GM12878 (cell line): ENCODE measurements at regions of chr14 and their contacts with region 1.

Region 1: DNA sequence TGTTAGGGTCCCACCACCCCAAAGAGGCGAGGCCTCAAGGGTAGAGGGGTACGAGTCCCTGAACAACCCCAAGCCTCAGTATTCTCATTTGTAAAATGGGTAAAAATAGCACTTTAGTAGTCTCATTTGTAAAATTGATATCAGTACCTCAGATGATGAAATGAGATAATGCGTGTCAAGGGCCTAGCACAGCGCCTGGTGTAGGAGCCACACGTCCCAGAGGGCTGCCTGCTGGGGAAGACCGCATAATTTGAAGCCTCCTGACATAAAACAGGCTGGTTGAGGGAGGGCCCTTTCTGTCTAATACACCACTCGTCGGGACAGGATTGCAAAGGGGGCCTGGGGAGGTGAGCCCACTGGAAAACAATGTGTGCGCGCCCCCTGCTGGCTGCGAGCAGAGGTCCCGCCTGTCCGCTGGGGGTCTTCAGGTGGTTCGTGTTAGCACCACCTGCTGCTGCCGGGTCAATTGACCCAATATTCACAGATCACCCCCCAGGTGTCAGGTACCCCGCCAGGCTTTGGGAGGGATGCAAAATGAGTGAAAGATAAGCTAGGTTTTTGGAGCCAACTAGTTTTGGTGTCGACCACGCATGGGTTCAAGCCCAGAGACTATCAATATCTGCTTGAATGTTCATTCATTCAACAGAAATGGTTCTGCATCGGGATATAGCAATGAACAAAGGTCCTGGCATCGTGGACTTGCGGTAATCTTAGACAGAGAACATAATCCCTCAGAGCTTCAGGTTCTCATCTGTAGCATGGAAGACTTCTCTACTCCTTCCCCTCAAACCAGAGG is 24.7 kb upstream of the IRF2BPL start:
- DNase-seq: no peak
- ATAC-seq: peak; percentile 98
- H3K4me3 ChIP-seq: no peak overlapping the region
- H3K27ac ChIP-seq: no peak overlapping the region
- H3K4me1 ChIP-seq: peaks cover 12% of the 10 kb centered on the region
- H3K27me3 ChIP-seq: no peaks in the 10 kb centered on the region
- CTCF ChIP-seq: peak; percentile 77 to 90 (median 85)
- EP300 ChIP-seq: no peak
- POLR2A ChIP-seq: no peak
- RAD21 ChIP-seq: peak; percentile 91

Region 2: DNA sequence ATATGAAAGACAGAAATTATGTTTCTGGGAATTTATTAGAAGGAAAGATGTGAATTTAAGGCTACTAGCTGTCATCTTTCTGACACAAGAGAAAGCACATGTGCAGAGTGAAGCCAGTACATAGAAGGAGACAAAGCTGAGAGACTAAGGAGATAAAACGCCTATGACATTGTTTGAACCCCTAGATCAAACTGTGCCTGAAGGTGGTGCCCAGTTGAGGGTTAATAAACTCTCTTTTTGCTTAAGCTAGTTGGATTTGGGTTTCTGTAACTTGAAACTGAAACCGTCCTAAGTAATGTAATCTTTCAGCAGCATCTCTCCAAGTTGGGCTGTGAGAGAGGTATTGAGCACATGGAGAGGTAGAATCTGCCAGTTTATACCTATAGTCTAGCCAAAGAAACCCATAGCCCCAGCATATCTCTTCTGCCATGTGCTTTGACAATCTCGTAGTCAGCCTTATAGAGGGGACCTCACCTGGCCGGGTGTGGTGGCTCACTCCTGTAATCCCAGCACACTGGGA is 142.8 kb before region 1 on chr14:
- CTCF ChIA-PET with region 1: interaction called, 170 read pairs
- POLR2A ChIA-PET with region 1: interaction called, 11 read pairs
- RAD21 ChIA-PET with region 1: interaction called, 119 read pairs
- SMC1A ChIA-PET with region 1: interaction called, 174 read pairs
- in situ Hi-C with region 1: no loop called
- intact Hi-C with region 1: loop called (anchors 1 kb)
- DNase-seq: no peak
- ATAC-seq: no peak
- H3K4me3 ChIP-seq: no peak overlapping the region
- H3K27ac ChIP-seq: no peak overlapping the region
- H3K4me1 ChIP-seq: peaks cover 9% of the 10 kb centered on the region
- H3K27me3 ChIP-seq: no peaks in the 10 kb centered on the region
- CTCF ChIP-seq: no peak
- EP300 ChIP-seq: no peak
- POLR2A ChIP-seq: no peak
- RAD21 ChIP-seq: no peak

Region 3: DNA sequence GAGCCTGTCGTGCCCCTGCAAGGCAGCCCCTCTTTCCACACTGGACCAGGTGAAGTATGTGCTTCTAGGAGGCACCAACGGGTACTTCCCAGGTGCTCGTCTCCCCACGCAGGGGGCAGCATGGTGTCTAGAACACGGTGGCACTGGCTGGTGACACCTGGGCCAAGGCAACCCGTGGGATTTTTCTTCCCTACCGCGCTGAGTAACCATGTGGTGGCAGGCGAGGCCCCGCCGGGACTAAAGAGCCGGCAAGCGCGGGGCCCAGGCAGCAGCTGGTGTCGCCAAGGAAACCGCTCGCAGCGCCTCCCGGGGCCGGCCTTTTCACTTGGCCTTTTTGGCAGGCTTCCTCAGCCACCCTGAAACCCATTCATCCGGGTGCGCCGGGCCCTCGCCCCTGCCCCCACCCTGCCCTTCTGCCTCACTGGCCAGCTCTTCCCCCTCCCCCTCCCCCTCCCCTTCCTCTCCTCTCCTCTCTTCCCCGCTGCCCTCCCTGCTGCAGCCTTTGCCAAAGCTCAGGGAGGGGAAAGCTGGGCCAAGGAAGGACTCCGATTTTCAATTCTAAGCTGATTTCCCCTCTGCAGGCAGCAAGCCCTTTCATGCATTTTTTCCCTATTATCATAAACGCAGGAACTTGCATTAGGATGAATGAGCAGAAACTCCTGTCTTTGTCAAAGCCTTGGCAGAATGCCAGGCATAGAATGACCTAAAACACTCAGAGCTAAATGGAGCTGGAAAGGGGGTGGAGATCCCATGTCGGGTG is 106.0 kb before region 1 on chr14:
- CTCF ChIA-PET with region 1: interaction called, 26 read pairs
- POLR2A ChIA-PET with region 1: interaction called, 4 read pairs
- RAD21 ChIA-PET with region 1: interaction called, 24 read pairs
- SMC1A ChIA-PET with region 1: interaction called, 18 read pairs
- in situ Hi-C with region 1: no loop called
- intact Hi-C with region 1: no loop called
- DNase-seq: peak; percentile 67
- ATAC-seq: peak; percentile 87
- H3K4me3 ChIP-seq: no peak overlapping the region
- H3K27ac ChIP-seq: peak overlapping the region; percentile 64
- H3K4me1 ChIP-seq: peaks cover 29% of the 10 kb centered on the region
- H3K27me3 ChIP-seq: no peaks in the 10 kb centered on the region
- CTCF ChIP-seq: peak; percentile 45 to 72 (median 58)
- EP300 ChIP-seq: peak in 1 of 2 experiments; percentile 65; a peak in 2 of 4 replicates
- POLR2A ChIP-seq: no peak
- RAD21 ChIP-seq: peak; percentile 72

Region 4: DNA sequence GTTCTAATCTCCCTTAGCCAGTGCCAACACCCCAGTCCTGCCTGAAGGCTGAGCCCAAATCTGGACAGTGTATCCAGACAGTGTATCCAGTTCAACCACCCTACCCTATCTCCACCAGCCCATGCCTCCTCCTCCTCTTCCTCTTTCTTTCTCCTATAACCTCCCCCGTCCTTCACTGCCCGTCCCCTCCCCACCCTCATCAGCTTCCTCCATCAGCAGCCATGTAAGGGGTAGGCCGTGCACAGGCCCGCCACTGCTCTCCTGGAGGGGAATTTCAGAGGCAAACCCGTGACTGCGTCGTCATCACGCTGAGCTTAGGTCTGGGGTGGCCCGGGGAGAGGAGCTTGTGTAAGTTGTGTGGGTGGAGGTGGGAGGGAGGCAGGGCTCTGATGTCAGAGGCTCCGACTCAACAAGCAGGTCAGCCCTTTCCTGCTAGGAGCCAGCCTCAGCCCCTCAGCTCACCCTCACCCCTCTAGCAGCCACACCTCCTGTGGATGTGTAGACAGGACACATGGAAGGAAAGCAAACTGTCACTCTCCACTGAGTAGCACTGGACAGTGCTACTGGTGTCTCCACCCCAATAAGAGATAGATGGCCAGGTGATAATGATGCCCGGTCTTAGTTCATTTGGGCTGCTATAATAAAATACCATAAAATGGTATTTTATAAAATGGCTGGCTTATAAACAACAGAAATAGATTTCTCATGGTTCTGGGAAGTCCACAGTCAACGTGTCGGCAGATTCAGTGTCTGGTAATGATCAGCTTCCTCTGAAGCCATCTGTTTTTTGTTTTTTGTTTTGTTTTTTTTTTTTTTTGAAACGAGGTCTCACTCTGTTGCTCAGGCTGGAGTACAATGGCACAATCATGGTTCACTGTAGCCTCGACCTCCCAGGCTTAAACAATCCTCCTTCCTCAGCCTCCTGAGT is 75.2 kb before region 1 on chr14:
- CTCF ChIA-PET with region 1: interaction called, 18 read pairs
- POLR2A ChIA-PET with region 1: interaction called, 8 read pairs
- RAD21 ChIA-PET with region 1: interaction called, 3 read pairs
- SMC1A ChIA-PET with region 1: interaction called, 3 read pairs
- in situ Hi-C with region 1: no loop called
- intact Hi-C with region 1: no loop called
- DNase-seq: peak; percentile 81
- ATAC-seq: peak; percentile 98
- H3K4me3 ChIP-seq: no peak overlapping the region
- H3K27ac ChIP-seq: peak overlapping the region; percentile 65
- H3K4me1 ChIP-seq: peaks cover 20% of the 10 kb centered on the region
- H3K27me3 ChIP-seq: no peaks in the 10 kb centered on the region
- CTCF ChIP-seq: no peak
- EP300 ChIP-seq: peak; percentile 64 to 75; a peak in 2 of 4 replicates
- POLR2A ChIP-seq: peak; percentile 72
- RAD21 ChIP-seq: 0 out of 2 replicates have a peak, but pooled peaks have one; percentile 20

Region 5: DNA sequence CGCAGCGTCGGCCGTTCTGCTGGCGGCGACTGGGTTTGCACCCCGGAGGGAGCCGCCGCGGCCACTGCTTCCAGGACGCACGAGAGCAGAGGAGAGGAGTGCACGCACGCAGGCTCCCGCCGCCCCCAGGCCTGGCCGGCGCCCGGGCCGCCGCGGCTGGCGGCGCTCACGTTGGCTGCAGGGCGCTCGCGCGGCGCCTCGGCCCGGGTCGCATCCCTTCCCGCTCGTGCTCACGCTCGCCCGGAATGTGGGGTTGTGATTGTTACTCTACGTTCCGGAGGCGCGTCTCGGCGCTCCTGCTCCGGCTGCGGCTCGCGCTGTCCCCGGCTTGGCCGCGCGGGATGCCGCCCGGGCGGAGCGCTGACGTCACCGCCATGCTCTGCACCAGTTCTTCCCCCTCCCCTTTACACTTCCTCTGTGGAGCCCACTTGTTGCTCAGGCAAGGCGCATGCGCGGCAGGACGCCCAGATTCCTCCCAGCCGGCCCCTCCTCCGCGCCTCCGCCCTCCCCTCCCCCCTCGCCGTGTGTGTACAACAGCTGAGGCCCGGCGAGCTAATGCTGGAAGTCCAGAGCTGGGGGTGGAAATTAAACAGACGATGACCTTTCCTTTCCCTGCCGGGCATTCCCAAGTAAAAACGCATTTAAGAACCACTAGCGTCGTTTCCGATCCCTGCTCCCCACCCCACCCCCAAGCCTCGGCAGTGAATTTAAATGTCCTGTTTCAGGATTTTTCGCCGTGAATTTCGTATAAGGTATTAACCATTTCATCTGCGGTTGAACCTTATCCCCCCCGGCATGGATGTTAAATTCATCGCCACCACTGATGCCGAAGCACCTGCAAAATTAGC is 24.6 kb before region 1 on chr14 and contains the start of gene IRF2BPL:
- CTCF ChIA-PET with region 1: interaction called, 16 read pairs
- POLR2A ChIA-PET with region 1: interaction called, 151 read pairs
- RAD21 ChIA-PET with region 1: interaction called, 11 read pairs
- SMC1A ChIA-PET with region 1: interaction called, 23 read pairs
- in situ Hi-C with region 1: no loop called
- intact Hi-C with region 1: loop called (anchors 2 kb)
- DNase-seq: peak; percentile 87
- ATAC-seq: peak; percentile 61
- H3K4me3 ChIP-seq: peak within 1 kb of the TSS; percentile 81
- H3K27ac ChIP-seq: peak within 1 kb of the TSS; percentile 98
- H3K4me1 ChIP-seq: peaks cover 38% of the 10 kb centered on the region
- H3K27me3 ChIP-seq: no peaks in the 10 kb centered on the region
- CTCF ChIP-seq: no peak
- EP300 ChIP-seq: peak in 1 of 2 experiments; percentile 29; a peak in 2 of 4 replicates
- POLR2A ChIP-seq: peak; percentile 83
- RAD21 ChIP-seq: no peak
- polyA plus RNA-seq, gene IRF2BPL: 1.2 to 1.9 TPM

Region 6: DNA sequence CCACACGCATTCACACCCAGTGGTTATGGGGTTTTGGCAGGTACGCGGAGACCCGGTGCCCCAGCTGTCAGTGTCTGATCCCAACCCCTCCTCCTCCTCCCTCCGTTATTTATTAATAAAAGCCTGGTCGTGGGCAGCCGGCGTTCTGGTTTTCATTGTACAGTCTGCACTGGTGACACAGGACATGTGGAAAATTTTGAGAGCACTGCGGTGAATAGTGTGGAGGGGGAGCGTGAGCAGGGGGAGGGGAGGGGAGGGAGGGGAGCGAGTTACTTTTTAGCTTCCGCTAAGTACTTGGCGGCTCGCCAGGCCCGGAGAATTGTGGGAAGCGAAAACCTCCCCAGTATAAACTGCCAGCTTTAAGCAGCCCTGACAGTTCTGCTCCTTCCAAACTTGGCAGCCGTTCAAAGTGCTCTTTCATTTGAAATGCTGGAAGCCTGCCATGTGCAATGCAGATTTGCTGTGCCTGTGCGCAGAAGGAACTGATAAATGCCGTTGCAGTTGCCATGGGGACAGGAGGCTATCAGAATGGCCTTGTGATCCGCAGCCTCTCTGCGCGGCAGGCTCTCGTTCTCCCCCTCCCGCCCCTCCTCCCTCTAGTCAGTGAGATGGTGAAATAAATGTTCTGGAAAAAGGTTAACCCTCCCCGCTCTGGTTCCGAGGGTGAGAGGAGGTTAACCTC is 13.0 kb before region 1 on chr14:
- CTCF ChIA-PET with region 1: interaction called, 72 read pairs
- POLR2A ChIA-PET with region 1: interaction called, 151 read pairs
- RAD21 ChIA-PET with region 1: interaction called, 28 read pairs
- SMC1A ChIA-PET with region 1: interaction called, 56 read pairs
- in situ Hi-C with region 1: no loop called
- intact Hi-C with region 1: no loop called
- DNase-seq: peak; percentile 99
- ATAC-seq: peak; percentile 75
- H3K4me3 ChIP-seq: peak overlapping the region; percentile 50
- H3K27ac ChIP-seq: peak overlapping the region; percentile 93
- H3K4me1 ChIP-seq: peaks cover 87% of the 10 kb centered on the region
- H3K27me3 ChIP-seq: no peaks in the 10 kb centered on the region
- CTCF ChIP-seq: no peak
- EP300 ChIP-seq: peak; percentile 42 to 61
- POLR2A ChIP-seq: peak; percentile 55; the same call in 1 of the 2 replicates
- RAD21 ChIP-seq: no peak

Region 7: DNA sequence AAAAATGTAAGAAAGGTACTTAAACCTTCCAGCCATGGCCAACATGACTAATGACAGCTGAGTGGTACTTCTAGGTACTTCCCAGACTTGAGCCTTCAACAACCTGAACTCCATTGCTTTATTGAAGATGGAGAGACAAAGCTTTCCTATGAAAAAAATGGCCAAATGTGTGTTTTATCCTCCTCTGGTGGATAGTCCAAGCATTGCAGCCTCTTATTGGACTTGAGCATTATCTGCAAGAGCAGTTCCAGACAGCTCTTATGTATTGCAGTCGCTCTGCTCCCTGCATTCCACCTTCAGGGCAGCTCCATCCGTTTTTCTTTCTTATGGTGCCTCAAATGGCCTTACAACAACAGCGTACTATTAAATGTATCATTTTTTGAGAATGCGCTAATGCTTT is 1705.1 kb after region 1 on chr14:
- CTCF ChIA-PET with region 1: no interaction called
- POLR2A ChIA-PET with region 1: no interaction called
- RAD21 ChIA-PET with region 1: no interaction called
- SMC1A ChIA-PET with region 1: no interaction called
- in situ Hi-C with region 1: no loop called
- intact Hi-C with region 1: no loop called
- DNase-seq: peak; percentile 13
- ATAC-seq: peak; percentile 78
- H3K4me3 ChIP-seq: no peak overlapping the region
- H3K27ac ChIP-seq: no peak overlapping the region
- H3K4me1 ChIP-seq: no peaks in the 10 kb centered on the region
- H3K27me3 ChIP-seq: no peaks in the 10 kb centered on the region
- CTCF ChIP-seq: peak; percentile 52 to 74 (median 71)
- EP300 ChIP-seq: no peak
- POLR2A ChIP-seq: no peak
- RAD21 ChIP-seq: peak; percentile 40